Ascending aorta (tissue), 2 donors: ENCODE measurements at regions of chr12 and their contacts with region 1.

Region 1: GRCh38 chr12:104177663-104178501 is 37.7 kb upstream of the TXNRD1 start:
- DNase-seq: peak; percentile 61 to 92
- H3K4me3 ChIP-seq: no peak overlapping the region
- H3K27ac ChIP-seq: peak overlapping the region; percentile 78
- H3K4me1 ChIP-seq: peaks cover 15 to 39% of the 10 kb centered on the region in 2 donors
- H3K27me3 ChIP-seq: no peaks in the 10 kb centered on the region
- CTCF ChIP-seq: peak in 2 of 3 experiments; percentile 31 to 54

Region 2: GRCh38 chr12:104137913-104138796 is 39.7 kb before region 1 on chr12 and contains the start of gene NFYB:
- intact Hi-C with region 1: loop called (anchors 2 kb)
- DNase-seq: peak; percentile 91 to 99
- H3K4me3 ChIP-seq: peak within 1 kb of the TSS; percentile 88 to 97
- H3K27ac ChIP-seq: peak within 1 kb of the TSS; percentile 91 to 98
- H3K4me1 ChIP-seq: peaks cover 0 to 28% of the 10 kb centered on the region in 2 donors
- H3K27me3 ChIP-seq: no peaks in the 10 kb centered on the region
- CTCF ChIP-seq: no peak
- total RNA-seq, gene NFYB: 62.8 TPM